ENCODE measurements at regions of chr7 and their contacts with region 1.

Region 1: GRCh38 chr7:149195180-149196150 is at the start of gene ZNF282:
- DNase-seq: peak; percentile 74 to 87
- ATAC-seq: peak; percentile 95 to 96
- H3K4me3 ChIP-seq: peak within 1 kb of the TSS; percentile 76 to 87 (median 80)
- H3K27ac ChIP-seq: peak within 1 kb of the TSS; percentile 80 to 96 (median 86)
- H3K4me1 ChIP-seq: peaks cover 9 to 17% of the 10 kb centered on the region in 2 donors
- H3K27me3 ChIP-seq: peaks cover 0 to 2% (median 0%) of the 10 kb centered on the region in 3 donors
- CTCF ChIP-seq: peak in 4 of 5 experiments; percentile 33 to 71 (median 54)
- POLR2A ChIP-seq: peak; percentile 41 to 43
- total RNA-seq, gene ZNF282: 16.8 to 24.1 (median 23.0) TPM

Region 2: GRCh38 chr7:148962823-148963582 is 232.5 kb before region 1 on chr7:
- in situ Hi-C with region 1: no loop called
- intact Hi-C with region 1: no loop called
- DNase-seq: peak; percentile 22 to 57
- ATAC-seq: peak; percentile 79 to 84
- H3K4me3 ChIP-seq: peak overlapping the region; percentile 51 to 72 (median 65)
- H3K27ac ChIP-seq: peak overlapping the region; percentile 65 to 78 (median 67)
- H3K4me1 ChIP-seq: peaks cover 9 to 14% of the 10 kb centered on the region in 2 donors
- H3K27me3 ChIP-seq: no peaks in the 10 kb centered on the region
- CTCF ChIP-seq: peak in 4 of 5 experiments; percentile 54 to 67 (median 61)
- POLR2A ChIP-seq: no peak

Region 3: DNA sequence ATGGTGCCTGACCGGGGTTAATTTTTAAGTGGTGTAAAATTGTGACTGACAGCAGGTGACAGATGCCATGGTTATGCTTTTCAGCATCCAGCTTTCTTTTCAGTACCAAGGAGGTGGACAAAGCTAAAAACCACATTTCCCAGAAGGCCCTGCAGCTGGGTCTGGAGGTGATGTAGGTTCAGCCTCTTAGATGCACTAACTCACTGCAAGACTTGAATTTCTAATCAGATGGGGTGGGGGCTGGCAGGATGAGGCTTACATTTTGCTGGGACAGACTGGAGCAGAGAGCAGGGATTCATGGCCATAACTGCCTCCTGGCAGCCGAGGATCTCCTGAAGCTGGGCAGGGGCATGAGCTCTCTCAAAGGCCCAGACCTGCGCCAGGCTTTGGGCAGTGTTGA is 219.6 kb before region 1 on chr7:
- in situ Hi-C with region 1: no loop called
- intact Hi-C with region 1: no loop called
- DNase-seq: no peak
- ATAC-seq: no peak
- H3K4me3 ChIP-seq: no peak overlapping the region
- H3K27ac ChIP-seq: no peak overlapping the region
- H3K4me1 ChIP-seq: no peaks in the 10 kb centered on the region
- H3K27me3 ChIP-seq: peaks cover 0 to 2% (median 0%) of the 10 kb centered on the region in 3 donors
- CTCF ChIP-seq: no peak
- POLR2A ChIP-seq: no peak

Region 4: GRCh38 chr7:149028346-149029109 is 166.9 kb before region 1 on chr7 and contains the start of gene PDIA4:
- in situ Hi-C with region 1: no loop called
- intact Hi-C with region 1: no loop called
- DNase-seq: peak; percentile 99
- ATAC-seq: peak; percentile 97
- H3K4me3 ChIP-seq: peak within 1 kb of the TSS; percentile 70 to 93 (median 86)
- H3K27ac ChIP-seq: peak within 1 kb of the TSS; percentile 83 to 98 (median 94)
- H3K4me1 ChIP-seq: peaks cover 16 to 21% of the 10 kb centered on the region in 2 donors
- H3K27me3 ChIP-seq: no peaks in the 10 kb centered on the region
- CTCF ChIP-seq: peak in 4 of 5 experiments; percentile 34 to 44 (median 40)
- POLR2A ChIP-seq: peak; percentile 72 to 94
- total RNA-seq, gene PDIA4: 10.8 to 19.6 (median 14.2) TPM

Region 5: GRCh38 chr7:149161241-149161848 is 34.1 kb before region 1 on chr7:
- in situ Hi-C with region 1: no loop called
- intact Hi-C with region 1: loop called (anchors 1 kb)
- DNase-seq: no peak
- ATAC-seq: no peak
- H3K4me3 ChIP-seq: no peak overlapping the region
- H3K27ac ChIP-seq: no peak overlapping the region
- H3K4me1 ChIP-seq: peaks cover 0 to 6% of the 10 kb centered on the region in 2 donors
- H3K27me3 ChIP-seq: no peaks in the 10 kb centered on the region
- CTCF ChIP-seq: no peak
- POLR2A ChIP-seq: no peak

Region 6: GRCh38 chr7:149284850-149285626 is 89.6 kb after region 1 on chr7:
- in situ Hi-C with region 1: no loop called
- intact Hi-C with region 1: loop called (anchors 2 kb)
- DNase-seq: peak; percentile 95 to 97
- ATAC-seq: peak; percentile 97
- H3K4me3 ChIP-seq: peak overlapping the region; percentile 68 to 86 (median 78)
- H3K27ac ChIP-seq: peak overlapping the region; percentile 77 to 89 (median 84)
- H3K4me1 ChIP-seq: peaks cover 6 to 11% of the 10 kb centered on the region in 2 donors
- H3K27me3 ChIP-seq: no peaks in the 10 kb centered on the region
- CTCF ChIP-seq: no peak
- POLR2A ChIP-seq: peak; percentile 60 to 65

Region 7: DNA sequence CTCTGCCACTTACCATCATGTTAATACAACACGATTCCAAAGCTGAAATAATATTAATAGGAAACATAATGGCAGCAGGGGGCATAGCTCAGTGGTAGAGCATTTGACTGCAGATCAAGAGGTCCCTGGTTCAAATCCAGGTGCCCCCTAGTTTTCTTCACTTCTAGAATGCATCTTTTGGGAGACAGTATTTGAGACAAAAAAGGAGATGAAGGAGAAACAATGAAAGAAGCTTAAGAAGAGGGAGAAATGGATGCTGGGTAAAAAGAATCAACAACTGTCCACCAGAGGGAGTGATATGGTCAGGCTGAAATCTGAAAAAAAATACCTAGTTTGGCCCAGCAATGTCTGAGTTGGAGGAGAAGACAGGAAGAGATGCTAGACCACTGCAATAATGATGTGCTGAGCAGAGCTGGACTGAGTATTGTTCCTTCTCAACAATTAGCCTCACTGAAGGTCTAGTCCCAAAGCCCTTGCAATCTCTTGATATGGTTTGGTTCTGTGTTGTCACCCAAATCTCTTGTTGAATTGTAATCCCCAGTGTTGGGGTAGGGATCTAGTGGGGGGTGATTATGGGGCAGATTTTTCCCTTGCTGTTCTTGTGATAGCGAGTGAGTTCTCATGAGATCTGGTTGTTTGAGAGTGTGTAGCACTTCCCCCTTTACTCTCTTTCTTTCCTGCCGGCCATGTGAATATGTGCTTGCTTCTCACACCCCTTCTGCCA is 114.8 kb after region 1 on chr7:
- in situ Hi-C with region 1: no loop called
- intact Hi-C with region 1: no loop called
- DNase-seq: no peak
- ATAC-seq: no peak
- H3K4me3 ChIP-seq: no peak overlapping the region
- H3K27ac ChIP-seq: no peak overlapping the region
- H3K4me1 ChIP-seq: no peaks in the 10 kb centered on the region
- H3K27me3 ChIP-seq: no peaks in the 10 kb centered on the region
- CTCF ChIP-seq: peak in 2 of 5 experiments; percentile 29 to 37
- POLR2A ChIP-seq: no peak

Measured in gastrocnemius medialis (tissue), 4 donors.